ENCODE measurements at regions of chr18 and their contacts with region 1.

Region 1: GRCh38 chr18:2994603-2995432 is 18.1 kb downstream of the LPIN2 start:
- DNase-seq: peak; percentile 66
- CTCF ChIP-seq: peak; percentile 76

Region 2: GRCh38 chr18:3151399-3152264 is 156.8 kb after region 1 on chr18:
- in situ Hi-C with region 1: loop called (anchors 10 kb)
- DNase-seq: peak; percentile 66
- CTCF ChIP-seq: peak; percentile 70

Region 3: DNA sequence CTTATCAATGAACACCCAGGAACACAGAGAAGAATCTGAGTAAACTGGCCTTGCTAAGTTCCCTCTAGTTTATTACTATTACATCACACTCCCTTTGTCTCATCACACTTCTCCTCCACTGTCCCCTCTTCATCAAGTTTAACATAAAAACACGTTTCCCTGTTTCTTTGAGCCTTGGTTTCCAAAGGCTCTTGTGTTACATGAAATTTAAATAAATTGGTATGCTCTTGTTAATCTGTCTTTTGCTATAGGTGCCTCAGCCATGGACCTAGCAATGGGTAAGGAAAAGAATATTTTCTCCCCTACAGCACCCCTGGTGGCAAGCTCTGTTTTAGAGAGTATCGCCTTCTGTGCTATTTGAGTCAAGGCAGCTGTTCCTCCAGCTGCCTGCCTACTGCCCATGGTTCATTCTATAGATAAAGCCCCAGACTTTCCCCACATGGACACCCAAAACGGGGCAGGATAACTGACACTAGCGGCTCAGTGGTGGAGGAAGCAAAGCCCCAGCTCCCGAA is 486.9 kb after region 1 on chr18:
- in situ Hi-C with region 1: no loop called
- DNase-seq: peak; percentile 42
- CTCF ChIP-seq: peak; percentile 46